Calu3 (cell line): ENCODE measurements at regions of chr13 and their contacts with region 1.

Region 1: GRCh38 chr13:101739382-101740178 is 287.1 kb downstream of the ITGBL1 start:
- DNase-seq: peak; percentile 11
- H3K4me3 Mint-ChIP-seq: peak overlapping the region; percentile 5
- H3K27ac Mint-ChIP-seq: peak overlapping the region; percentile 83
- H3K4me1 Mint-ChIP-seq: peaks cover 9% of the 10 kb centered on the region
- H3K27me3 Mint-ChIP-seq: no peaks in the 10 kb centered on the region
- CTCF ChIP-seq: no peak

Region 2: GRCh38 chr13:101626925-101627555 is 112.5 kb before region 1 on chr13:
- CTCF ChIA-PET with region 1: no interaction called
- intact Hi-C with region 1: loop called (anchors 10 kb)
- DNase-seq: no peak
- H3K4me3 Mint-ChIP-seq: no peak overlapping the region
- H3K27ac Mint-ChIP-seq: peak overlapping the region; percentile 47
- H3K4me1 Mint-ChIP-seq: no peaks in the 10 kb centered on the region
- H3K27me3 Mint-ChIP-seq: no peaks in the 10 kb centered on the region
- CTCF ChIP-seq: no peak